Astrocyte of the cerebellum (primary cell): ENCODE measurements at regions of chr4 and their contacts with region 1.

Region 1: GRCh38 chr4:97892592-97893266 is 250.5 kb downstream of the STPG2 start:
- DNase-seq: no peak
- H3K4me3 ChIP-seq: no peak overlapping the region
- CTCF ChIP-seq: no peak

Region 2: GRCh38 chr4:97577004-97577403 is 315.7 kb before region 1 on chr4:
- in situ Hi-C with region 1: no loop called
- DNase-seq: peak; percentile 53
- H3K4me3 ChIP-seq: no peak overlapping the region
- CTCF ChIP-seq: no peak

Region 3: DNA sequence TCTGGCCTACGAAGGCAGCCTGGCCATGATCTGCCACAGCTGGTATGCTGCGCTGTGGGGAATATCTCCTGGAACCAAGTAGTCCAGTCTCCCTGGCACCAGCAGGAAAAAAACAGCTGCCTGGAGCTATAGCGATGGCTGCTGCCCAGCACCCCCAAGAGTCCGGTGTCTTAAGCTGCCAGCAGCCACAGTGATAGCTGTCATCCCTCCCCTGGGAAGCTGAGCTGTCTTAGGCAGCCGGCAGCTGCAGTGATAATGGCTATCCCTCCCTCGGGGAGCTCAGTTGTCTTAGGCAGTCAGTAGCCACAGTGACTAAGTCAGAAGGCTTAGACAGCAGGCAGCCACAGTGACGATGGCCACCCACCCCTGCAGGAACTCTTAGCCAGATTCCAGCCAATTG is 45.4 kb after region 1 on chr4:
- in situ Hi-C with region 1: loop called (anchors 5 kb)
- DNase-seq: no peak
- H3K4me3 ChIP-seq: no peak overlapping the region
- CTCF ChIP-seq: no peak